Cardiac septum (tissue), 1 donor: ENCODE measurements at regions of chrX and their contacts with region 1.

Region 1: GRCh38 chrX:40266490-40267333 is 169.0 kb upstream of the BCOR start:
- DNase-seq: peak; percentile 86

Region 2: GRCh38 chrX:39736216-39737211 is 530.2 kb before region 1 on chrX:
- intact Hi-C with region 1: loop called (anchors 5 kb)
- DNase-seq: peak; percentile 92

Region 3: GRCh38 chrX:40068044-40068443 is 198.7 kb before region 1 on chrX:
- intact Hi-C with region 1: loop called (anchors 5 kb)
- DNase-seq: no peak

Region 4: GRCh38 chrX:40097497-40098263 is 169.0 kb before region 1 on chrX and contains the start of gene BCOR:
- intact Hi-C with region 1: loop called (anchors 5 kb)
- DNase-seq: peak; percentile 84
- total RNA-seq, gene BCOR: 24.2 TPM

Region 5: DNA sequence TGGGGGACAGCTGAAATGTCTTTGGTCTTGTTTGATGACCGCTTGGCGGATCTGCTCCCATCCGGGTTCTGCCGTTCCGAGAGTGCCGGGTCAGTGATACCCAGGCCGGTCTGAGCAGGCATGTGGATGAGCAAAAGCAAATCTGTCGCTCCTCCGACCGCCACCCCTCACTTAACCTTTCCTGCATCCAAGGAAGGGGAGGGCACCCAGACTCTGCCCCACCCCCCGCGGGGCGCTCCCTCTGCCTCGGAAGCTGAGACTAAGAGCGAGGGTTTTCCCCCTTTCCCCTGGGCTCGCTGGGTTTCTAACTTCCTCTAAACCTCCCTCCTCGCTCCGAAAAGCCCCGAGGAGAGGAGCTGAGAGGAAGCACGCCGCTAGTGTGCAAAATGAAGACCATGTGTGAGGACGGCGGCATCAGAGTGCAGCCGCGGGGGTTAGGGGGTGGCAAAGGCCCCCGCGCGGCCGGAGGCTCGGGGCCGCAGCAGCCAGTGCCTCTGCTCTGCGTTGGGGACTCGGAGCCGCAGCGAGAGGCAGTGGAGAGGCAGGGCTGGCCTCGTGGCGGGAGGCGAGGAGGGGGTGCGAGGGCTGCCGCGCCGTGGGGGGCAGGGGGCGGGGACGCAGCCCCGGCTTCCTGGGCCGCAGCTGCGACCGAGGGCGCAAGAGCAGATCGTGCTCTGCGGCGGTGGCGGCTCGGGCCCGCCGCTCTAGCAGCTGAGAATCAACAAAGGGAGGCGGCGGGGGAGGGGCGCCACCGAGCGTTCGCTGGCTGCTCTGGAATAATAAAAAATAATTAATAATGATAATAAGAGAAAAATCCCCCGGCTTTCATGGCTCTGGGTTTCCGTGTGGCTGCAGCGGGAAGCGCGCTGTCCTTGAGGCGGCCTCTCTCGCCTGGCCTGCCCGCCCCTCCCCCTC is 113.1 kb before region 1 on chrX:
- intact Hi-C with region 1: loop called (anchors 5 kb)
- DNase-seq: peak; percentile 80

Region 6: DNA sequence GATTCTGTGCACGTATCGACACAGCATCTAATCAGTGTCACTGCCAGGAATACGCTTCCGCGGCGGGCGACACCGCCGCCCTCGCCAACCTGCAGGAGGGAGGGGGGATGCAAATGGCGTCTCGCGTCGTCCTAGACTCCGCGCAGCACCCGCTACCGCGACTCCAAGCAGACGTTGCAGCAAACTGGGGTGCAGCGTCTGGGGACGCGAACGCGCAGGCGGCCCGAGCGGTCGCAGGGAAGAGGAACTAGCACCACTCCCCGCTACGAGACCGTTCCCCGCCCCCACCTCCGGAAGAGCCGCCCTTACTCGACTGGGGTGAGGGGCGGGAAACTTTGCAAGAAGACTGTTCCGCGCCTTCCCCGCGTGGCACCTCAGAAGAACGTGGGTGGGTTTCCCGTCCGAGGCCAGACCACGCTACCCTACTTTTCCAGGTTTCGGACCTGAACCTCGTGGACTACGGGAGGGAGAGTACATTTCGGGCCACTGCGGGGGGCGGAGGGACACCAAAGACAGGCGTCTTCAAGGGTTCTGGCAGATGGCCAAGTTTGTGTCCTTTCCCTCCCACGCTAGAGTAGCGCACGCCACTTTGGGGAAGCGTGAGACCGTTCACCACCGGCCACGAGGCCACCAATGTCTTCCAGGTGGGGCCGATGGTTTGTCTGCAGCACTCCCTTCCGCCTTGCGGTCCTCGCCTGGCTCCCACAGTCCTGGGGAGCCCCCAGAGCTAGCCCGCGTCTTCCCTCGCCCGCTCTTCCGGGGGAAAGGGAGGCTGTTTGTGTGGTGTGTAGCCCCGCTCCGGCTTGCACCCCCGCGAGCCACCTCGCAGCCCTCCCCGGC is 91.0 kb before region 1 on chrX:
- intact Hi-C with region 1: loop called (anchors 5 kb)
- DNase-seq: peak; percentile 90